Ascending aorta (tissue), 2 donors: ENCODE measurements at regions of chr19 and their contacts with region 1.

Region 1: GRCh38 chr19:51473009-51473707 is 5.2 kb upstream of the CEACAM18 start:
- DNase-seq: peak in 1 of 2 donors; percentile 86
- H3K4me3 ChIP-seq: no peak overlapping the region
- H3K27ac ChIP-seq: no peak overlapping the region
- H3K4me1 ChIP-seq: no peaks in the 10 kb centered on the region
- H3K27me3 ChIP-seq: no peaks in the 10 kb centered on the region
- CTCF ChIP-seq: peak; percentile 68 to 80 (median 80)

Region 2: GRCh38 chr19:50777754-50778303 is 695.3 kb before region 1 on chr19:
- intact Hi-C with region 1: no loop called
- DNase-seq: no peak
- H3K4me3 ChIP-seq: no peak overlapping the region
- H3K27ac ChIP-seq: no peak overlapping the region
- H3K4me1 ChIP-seq: no peaks in the 10 kb centered on the region
- H3K27me3 ChIP-seq: peaks cover 7% of the 10 kb centered on the region
- CTCF ChIP-seq: no peak

Region 3: GRCh38 chr19:51660975-51661600 is 187.9 kb after region 1 on chr19:
- intact Hi-C with region 1: loop called (anchors 1 kb)
- DNase-seq: no peak
- H3K4me3 ChIP-seq: no peak overlapping the region
- H3K27ac ChIP-seq: no peak overlapping the region
- H3K4me1 ChIP-seq: peaks cover 0 to 2% of the 10 kb centered on the region in 2 donors
- H3K27me3 ChIP-seq: no peaks in the 10 kb centered on the region
- CTCF ChIP-seq: peak; percentile 13 to 54 (median 45)

Region 4: GRCh38 chr19:51777570-51778462 is 304.7 kb after region 1 on chr19:
- intact Hi-C with region 1: loop called (anchors 10 kb)
- DNase-seq: peak in 1 of 2 donors; percentile 76
- H3K4me3 ChIP-seq: no peak overlapping the region
- H3K27ac ChIP-seq: no peak overlapping the region
- H3K4me1 ChIP-seq: no peaks in the 10 kb centered on the region
- H3K27me3 ChIP-seq: no peaks in the 10 kb centered on the region
- CTCF ChIP-seq: peak; percentile 56 to 75 (median 65)